ENCODE measurements at regions of chr13 and their contacts with region 1.

Region 1: GRCh38 chr13:22801402-22802003 is 379.3 kb upstream of the SGCG start:
- DNase-seq: peak in 1 of 4 experiments; percentile 30
- ATAC-seq: no peak
- H3K4me3 ChIP-seq: no peak overlapping the region
- H3K27ac ChIP-seq: no peak overlapping the region
- H3K4me1 ChIP-seq: no peaks in the 10 kb centered on the region; a peak in 1 of 5 replicates
- H3K27me3 ChIP-seq: no peaks in the 10 kb centered on the region
- CTCF ChIP-seq: peak; percentile 19 to 63 (median 32); a peak in 3 of 6 replicates
- EP300 ChIP-seq: no peak
- POLR2A ChIP-seq: no peak
- RAD21 ChIP-seq: peak; percentile 70 to 80

Region 2: GRCh38 chr13:22135441-22136130 is 665.9 kb before region 1 on chr13:
- CTCF ChIA-PET with region 1: no interaction called
- POLR2A ChIA-PET with region 1: no interaction called
- in situ Hi-C with region 1: no loop called
- intact Hi-C with region 1: no loop called
- DNase-seq: no peak
- ATAC-seq: no peak
- H3K4me3 ChIP-seq: no peak overlapping the region
- H3K27ac ChIP-seq: no peak overlapping the region
- H3K4me1 ChIP-seq: no peaks in the 10 kb centered on the region
- H3K27me3 ChIP-seq: no peaks in the 10 kb centered on the region; a peak in 1 of 5 replicates
- CTCF ChIP-seq: no peak
- EP300 ChIP-seq: no peak
- POLR2A ChIP-seq: no peak
- RAD21 ChIP-seq: no peak

Region 3: DNA sequence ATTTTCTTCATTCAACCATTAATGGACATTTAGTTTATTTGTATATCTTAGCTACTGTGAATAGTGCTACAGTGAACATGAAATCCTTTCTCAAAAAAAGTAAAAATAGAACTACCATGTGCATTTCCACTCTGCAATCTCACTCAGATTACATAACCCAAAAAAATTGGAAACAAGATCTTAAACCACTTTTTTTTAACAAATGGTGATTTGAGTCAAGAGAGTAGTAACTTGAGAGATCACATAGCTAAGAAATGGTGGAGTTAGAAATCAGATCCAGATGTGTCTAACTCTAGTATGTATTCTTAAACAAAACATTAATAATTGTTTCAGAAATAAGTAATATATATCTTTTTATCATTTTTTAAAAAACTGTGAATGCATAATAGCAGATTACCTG is 61.0 kb after region 1 on chr13:
- CTCF ChIA-PET with region 1: no interaction called
- POLR2A ChIA-PET with region 1: no interaction called
- in situ Hi-C with region 1: no loop called
- intact Hi-C with region 1: loop called (anchors 10 kb)
- DNase-seq: no peak
- ATAC-seq: no peak
- H3K4me3 ChIP-seq: no peak overlapping the region
- H3K27ac ChIP-seq: no peak overlapping the region
- H3K4me1 ChIP-seq: no peaks in the 10 kb centered on the region
- H3K27me3 ChIP-seq: no peaks in the 10 kb centered on the region
- CTCF ChIP-seq: no peak
- EP300 ChIP-seq: no peak
- POLR2A ChIP-seq: no peak
- RAD21 ChIP-seq: no peak

Region 4: GRCh38 chr13:23020223-23020843 is 218.8 kb after region 1 on chr13:
- CTCF ChIA-PET with region 1: interaction called, 7 read pairs
- POLR2A ChIA-PET with region 1: no interaction called
- in situ Hi-C with region 1: loop called (anchors 10 kb)
- intact Hi-C with region 1: loop called (anchors 1 kb)
- DNase-seq: peak; percentile 17 to 68 (median 22)
- ATAC-seq: peak; percentile 87
- H3K4me3 ChIP-seq: no peak overlapping the region
- H3K27ac ChIP-seq: no peak overlapping the region
- H3K4me1 ChIP-seq: no peaks in the 10 kb centered on the region
- H3K27me3 ChIP-seq: no peaks in the 10 kb centered on the region; a peak in 3 of 5 replicates
- CTCF ChIP-seq: peak; percentile 50 to 64 (median 60); a peak in 5 of 6 replicates
- EP300 ChIP-seq: no peak
- POLR2A ChIP-seq: no peak
- RAD21 ChIP-seq: peak; percentile 54 to 78

Region 5: GRCh38 chr13:23087880-23088279 is 286.4 kb after region 1 on chr13:
- CTCF ChIA-PET with region 1: interaction called, 3 read pairs
- POLR2A ChIA-PET with region 1: no interaction called
- in situ Hi-C with region 1: loop called (anchors 10 kb)
- intact Hi-C with region 1: loop called (anchors 5 kb)
- DNase-seq: peak; percentile 13 to 50 (median 23)
- ATAC-seq: peak; percentile 70; the same call in 2 of the 3 replicates
- H3K4me3 ChIP-seq: no peak overlapping the region
- H3K27ac ChIP-seq: no peak overlapping the region
- H3K4me1 ChIP-seq: no peaks in the 10 kb centered on the region
- H3K27me3 ChIP-seq: no peaks in the 10 kb centered on the region
- CTCF ChIP-seq: peak; percentile 36 to 54 (median 49)
- EP300 ChIP-seq: no peak
- POLR2A ChIP-seq: no peak
- RAD21 ChIP-seq: peak in 1 of 2 experiments; percentile 51; a peak in 2 of 4 replicates

Region 6: GRCh38 chr13:23175920-23176319 is 374.4 kb after region 1 on chr13:
- CTCF ChIA-PET with region 1: interaction called, 4 read pairs
- POLR2A ChIA-PET with region 1: interaction called, 3 read pairs
- in situ Hi-C with region 1: no loop called
- intact Hi-C with region 1: loop called (anchors 5 kb)
- DNase-seq: no peak
- ATAC-seq: no peak
- H3K4me3 ChIP-seq: no peak overlapping the region
- H3K27ac ChIP-seq: no peak overlapping the region
- H3K4me1 ChIP-seq: no peaks in the 10 kb centered on the region
- H3K27me3 ChIP-seq: peaks cover 0 to 4% of the 10 kb centered on the region in 2 experiments; a peak in 1 of 5 replicates
- CTCF ChIP-seq: peak in 1 of 3 experiments; percentile 20; a peak in 1 of 6 replicates
- EP300 ChIP-seq: no peak
- POLR2A ChIP-seq: no peak
- RAD21 ChIP-seq: peak; percentile 13 to 17; a peak in 1 of 4 replicates

Region 7: GRCh38 chr13:23599083-23599925 is 797.8 kb after region 1 on chr13:
- CTCF ChIA-PET with region 1: no interaction called
- POLR2A ChIA-PET with region 1: no interaction called
- in situ Hi-C with region 1: no loop called
- intact Hi-C with region 1: no loop called
- DNase-seq: no peak
- ATAC-seq: no peak
- H3K4me3 ChIP-seq: no peak overlapping the region
- H3K27ac ChIP-seq: no peak overlapping the region
- H3K4me1 ChIP-seq: no peaks in the 10 kb centered on the region
- H3K27me3 ChIP-seq: no peaks in the 10 kb centered on the region
- CTCF ChIP-seq: no peak
- EP300 ChIP-seq: no peak
- POLR2A ChIP-seq: no peak
- RAD21 ChIP-seq: no peak